CD8-positive, alpha-beta T cell (primary cell): ENCODE measurements at regions of chr12 and their contacts with region 1.

Region 1: GRCh38 chr12:118404876-118405521 is 28.6 kb downstream of the SUDS3 start:
- DNase-seq: peak; percentile 6 to 62 (median 48)
- ATAC-seq: peak; percentile 38
- H3K4me3 ChIP-seq: no peak overlapping the region
- H3K4me3 Mint-ChIP-seq: no peak overlapping the region
- H3K27ac ChIP-seq: no peak overlapping the region
- H3K27ac Mint-ChIP-seq: no peak overlapping the region
- H3K4me1 ChIP-seq: no peaks in the 10 kb centered on the region
- H3K4me1 Mint-ChIP-seq: peaks cover 2% of the 10 kb centered on the region
- H3K27me3 ChIP-seq: no peaks in the 10 kb centered on the region
- H3K27me3 Mint-ChIP-seq: no peaks in the 10 kb centered on the region
- CTCF ChIP-seq: peak; percentile 81

Region 2: DNA sequence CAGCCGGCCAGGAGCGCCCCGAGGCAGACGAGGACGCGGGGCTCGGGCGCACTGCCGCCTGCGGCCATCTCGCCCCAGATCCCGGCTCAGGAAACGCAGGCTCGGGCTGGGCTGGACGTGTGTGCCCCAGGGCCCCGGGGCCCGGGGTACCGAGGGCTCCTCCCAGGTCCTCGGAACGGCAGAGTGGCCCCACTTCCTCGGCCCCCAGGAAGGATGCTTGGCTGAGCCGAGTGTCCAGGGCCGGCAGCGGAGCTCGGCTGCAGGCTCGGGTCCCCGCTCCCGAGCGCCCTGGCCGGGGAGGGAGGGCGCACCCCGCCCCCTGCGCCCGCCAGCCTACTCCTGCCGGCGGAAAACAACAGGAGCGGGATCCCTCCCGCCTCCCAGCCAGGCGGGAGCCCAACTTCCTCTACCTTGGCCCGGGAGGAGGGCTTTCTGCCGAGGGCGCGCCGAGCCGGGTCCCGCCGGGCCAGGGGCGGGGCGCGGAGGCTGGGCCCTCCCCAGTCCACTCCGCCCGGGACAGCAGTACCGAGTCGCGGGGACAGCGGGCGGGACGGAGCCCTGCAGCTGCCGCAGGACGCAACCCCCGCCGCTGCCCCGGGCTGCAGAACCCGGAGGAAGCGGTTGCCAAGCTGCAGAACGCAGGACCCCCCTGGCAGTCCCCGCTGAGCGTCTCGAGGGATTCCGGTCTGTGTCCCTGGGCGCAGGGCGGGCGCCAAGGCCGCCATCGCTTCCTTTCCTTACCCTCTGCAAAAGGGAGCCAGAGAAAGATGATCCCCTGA is 301.2 kb before region 1 on chr12 and contains the start of gene VSIG10:
- CTCF ChIA-PET with region 1: no interaction called
- POLR2A ChIA-PET with region 1: no interaction called
- intact Hi-C with region 1: no loop called
- DNase-seq: peak in 6 of 9 experiments; percentile 6 to 51 (median 21)
- ATAC-seq: peak; percentile 56
- H3K4me3 ChIP-seq: peak within 1 kb of the TSS; percentile 42 to 53
- H3K4me3 Mint-ChIP-seq: peak within 1 kb of the TSS; percentile 84
- H3K27ac ChIP-seq: no peak within 1 kb of the TSS
- H3K27ac Mint-ChIP-seq: no peak within 1 kb of the TSS
- H3K4me1 ChIP-seq: peaks cover 4% of the 10 kb centered on the region
- H3K4me1 Mint-ChIP-seq: peaks cover 10% of the 10 kb centered on the region
- H3K27me3 ChIP-seq: peaks cover 0 to 8% of the 10 kb centered on the region in 2 experiments
- H3K27me3 Mint-ChIP-seq: peaks cover 7% of the 10 kb centered on the region
- CTCF ChIP-seq: no peak
- total RNA-seq, gene VSIG10: 1.0 to 2.3 TPM

Region 3: DNA sequence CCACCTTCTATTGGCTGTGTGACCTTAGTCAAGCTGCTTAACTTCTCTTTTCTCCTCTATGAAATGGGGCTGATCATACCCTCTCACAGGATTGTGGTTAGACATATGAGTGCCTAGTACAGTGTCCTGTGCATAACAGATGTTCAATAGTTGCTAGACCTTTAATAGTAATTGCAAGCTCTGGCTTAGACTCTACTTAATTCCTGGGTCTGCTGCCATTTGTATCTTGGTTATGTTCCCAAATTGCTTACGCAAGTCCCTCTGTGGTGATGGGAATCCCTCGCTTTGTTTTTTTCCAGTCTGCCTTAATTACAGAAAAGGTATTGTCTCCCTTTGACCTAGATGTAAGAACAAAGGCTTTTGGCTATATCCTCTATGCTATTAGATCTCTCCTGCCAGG is 13.6 kb before region 1 on chr12:
- CTCF ChIA-PET with region 1: interaction called, 23 read pairs
- POLR2A ChIA-PET with region 1: no interaction called
- intact Hi-C with region 1: no loop called
- DNase-seq: no peak
- ATAC-seq: no peak
- H3K4me3 ChIP-seq: no peak overlapping the region
- H3K4me3 Mint-ChIP-seq: no peak overlapping the region
- H3K27ac ChIP-seq: no peak overlapping the region
- H3K27ac Mint-ChIP-seq: no peak overlapping the region
- H3K4me1 ChIP-seq: no peaks in the 10 kb centered on the region
- H3K4me1 Mint-ChIP-seq: no peaks in the 10 kb centered on the region
- H3K27me3 ChIP-seq: no peaks in the 10 kb centered on the region
- H3K27me3 Mint-ChIP-seq: no peaks in the 10 kb centered on the region
- CTCF ChIP-seq: no peak

Region 4: GRCh38 chr12:119544765-119545625 is 1140.0 kb after region 1 on chr12:
- CTCF ChIA-PET with region 1: interaction called, 6 read pairs
- POLR2A ChIA-PET with region 1: no interaction called
- intact Hi-C with region 1: loop called (anchors 1 to 2 kb)
- DNase-seq: peak; percentile 18 to 68 (median 52)
- ATAC-seq: peak; percentile 52
- H3K4me3 ChIP-seq: no peak overlapping the region
- H3K4me3 Mint-ChIP-seq: no peak overlapping the region
- H3K27ac ChIP-seq: no peak overlapping the region
- H3K27ac Mint-ChIP-seq: no peak overlapping the region
- H3K4me1 ChIP-seq: no peaks in the 10 kb centered on the region
- H3K4me1 Mint-ChIP-seq: no peaks in the 10 kb centered on the region
- H3K27me3 ChIP-seq: peaks cover 0 to 2% of the 10 kb centered on the region in 2 experiments
- H3K27me3 Mint-ChIP-seq: peaks cover 41% of the 10 kb centered on the region
- CTCF ChIP-seq: peak; percentile 84

Region 5: GRCh38 chr12:119644930-119645329 is 1239.9 kb after region 1 on chr12:
- CTCF ChIA-PET with region 1: no interaction called
- POLR2A ChIA-PET with region 1: no interaction called
- intact Hi-C with region 1: loop called in 1 of 2 experiments (anchors 2 kb)
- DNase-seq: no peak
- ATAC-seq: no peak
- H3K4me3 ChIP-seq: no peak overlapping the region
- H3K4me3 Mint-ChIP-seq: no peak overlapping the region
- H3K27ac ChIP-seq: no peak overlapping the region
- H3K27ac Mint-ChIP-seq: no peak overlapping the region
- H3K4me1 ChIP-seq: no peaks in the 10 kb centered on the region
- H3K4me1 Mint-ChIP-seq: no peaks in the 10 kb centered on the region
- H3K27me3 ChIP-seq: no peaks in the 10 kb centered on the region
- H3K27me3 Mint-ChIP-seq: peaks cover 8% of the 10 kb centered on the region
- CTCF ChIP-seq: no peak

Region 6: GRCh38 chr12:119667577-119668323 is 1262.8 kb after region 1 on chr12 and contains the start of gene PRKAB1:
- CTCF ChIA-PET with region 1: no interaction called
- POLR2A ChIA-PET with region 1: no interaction called
- intact Hi-C with region 1: loop called (anchors 5 to 10 kb)
- DNase-seq: peak; percentile 89 to 99 (median 94)
- ATAC-seq: peak; percentile 90
- H3K4me3 ChIP-seq: peak within 1 kb of the TSS; percentile 96 to 97
- H3K4me3 Mint-ChIP-seq: peak within 1 kb of the TSS; percentile 87
- H3K27ac ChIP-seq: peak within 1 kb of the TSS; percentile 75 to 88
- H3K27ac Mint-ChIP-seq: peak within 1 kb of the TSS; percentile 90
- H3K4me1 ChIP-seq: peaks cover 36% of the 10 kb centered on the region
- H3K4me1 Mint-ChIP-seq: peaks cover 59% of the 10 kb centered on the region
- H3K27me3 ChIP-seq: no peaks in the 10 kb centered on the region
- H3K27me3 Mint-ChIP-seq: no peaks in the 10 kb centered on the region
- CTCF ChIP-seq: peak; percentile 94
- total RNA-seq, gene PRKAB1: 17.9 to 23.7 TPM

Region 7: DNA sequence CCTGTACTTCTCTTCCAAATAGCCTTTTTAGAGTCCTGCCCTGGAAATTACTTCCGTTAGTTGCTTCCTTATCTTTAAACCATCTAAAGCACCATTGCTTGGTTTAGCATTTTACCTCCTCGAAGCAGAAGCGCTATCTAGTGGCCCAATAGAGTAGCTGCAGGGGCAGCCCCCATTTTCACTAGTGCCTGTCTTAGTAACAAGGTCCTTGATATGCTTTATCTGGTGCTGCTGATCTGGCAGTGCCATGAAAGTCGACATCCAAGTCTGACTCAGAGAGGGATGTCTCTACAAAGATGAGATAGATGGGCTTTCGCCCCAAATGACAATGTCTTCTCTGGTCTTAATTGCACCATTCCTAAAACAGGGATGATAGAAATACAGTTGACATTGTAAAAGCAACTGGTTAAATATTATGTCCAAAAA is 1497.1 kb after region 1 on chr12:
- CTCF ChIA-PET with region 1: no interaction called
- POLR2A ChIA-PET with region 1: no interaction called
- intact Hi-C with region 1: loop called (anchors 5 kb)
- DNase-seq: peak; percentile 44 to 78 (median 69)
- ATAC-seq: peak; percentile 100
- H3K4me3 ChIP-seq: no peak overlapping the region
- H3K4me3 Mint-ChIP-seq: no peak overlapping the region
- H3K27ac ChIP-seq: no peak overlapping the region
- H3K27ac Mint-ChIP-seq: no peak overlapping the region
- H3K4me1 ChIP-seq: no peaks in the 10 kb centered on the region
- H3K4me1 Mint-ChIP-seq: peaks cover 5% of the 10 kb centered on the region
- H3K27me3 ChIP-seq: no peaks in the 10 kb centered on the region
- H3K27me3 Mint-ChIP-seq: no peaks in the 10 kb centered on the region
- CTCF ChIP-seq: peak; percentile 79

Region 8: GRCh38 chr12:120067084-120067869 is 1662.3 kb after region 1 on chr12:
- CTCF ChIA-PET with region 1: no interaction called
- POLR2A ChIA-PET with region 1: no interaction called
- intact Hi-C with region 1: no loop called
- DNase-seq: no peak
- ATAC-seq: no peak
- H3K4me3 ChIP-seq: no peak overlapping the region
- H3K4me3 Mint-ChIP-seq: no peak overlapping the region
- H3K27ac ChIP-seq: no peak overlapping the region
- H3K27ac Mint-ChIP-seq: peak overlapping the region; percentile 16
- H3K4me1 ChIP-seq: no peaks in the 10 kb centered on the region
- H3K4me1 Mint-ChIP-seq: no peaks in the 10 kb centered on the region
- H3K27me3 ChIP-seq: no peaks in the 10 kb centered on the region
- H3K27me3 Mint-ChIP-seq: no peaks in the 10 kb centered on the region
- CTCF ChIP-seq: no peak